Activated naive CD4-positive, alpha-beta T cell treated with anti-CD3 and anti-CD28 coated beads, Interleukin-2, amount 10 ng/mL, durations not matched to agents 7 days and 5 days (primary cell): ENCODE measurements at regions of chr2 and their contacts with region 1.

Region 1: DNA sequence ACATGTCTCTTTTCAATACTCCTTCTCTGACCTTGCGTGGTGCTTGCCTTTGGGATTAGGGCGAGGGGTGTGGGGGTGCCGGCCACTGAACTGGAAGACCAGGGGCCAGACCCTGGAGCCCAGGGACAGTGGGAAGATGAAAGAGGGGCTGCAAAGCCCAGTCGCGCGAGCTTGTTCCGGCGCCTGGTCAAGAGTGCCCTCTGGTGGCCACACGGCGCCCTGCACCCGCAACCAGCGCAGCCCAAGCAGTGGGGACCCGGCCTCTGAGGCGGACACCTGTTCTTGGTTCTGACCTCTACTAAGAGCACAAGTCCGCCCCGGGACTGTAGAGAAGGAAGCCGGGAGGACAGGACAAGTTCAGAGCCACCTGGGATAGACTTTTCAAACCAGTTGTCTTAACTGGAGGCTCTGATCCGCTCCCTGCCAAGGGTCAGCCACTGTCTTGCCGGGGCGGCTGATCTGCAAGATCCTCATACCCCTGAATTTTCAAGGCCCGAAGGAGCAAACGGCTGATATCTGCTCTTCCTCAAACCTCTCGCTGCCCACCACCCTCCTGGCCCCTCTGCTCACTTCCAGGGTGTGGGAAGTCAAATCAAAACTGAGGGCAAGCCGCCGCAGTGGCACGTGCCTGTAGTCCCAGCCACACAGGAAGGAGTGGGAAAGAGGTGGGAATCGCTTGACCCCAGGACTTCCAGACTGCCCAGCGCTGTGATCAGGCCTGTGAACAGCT is 14.9 kb upstream of the MSH6 start:
- DNase-seq: peak; percentile 76
- H3K4me3 Mint-ChIP-seq: no peak overlapping the region
- H3K27ac Mint-ChIP-seq: no peak overlapping the region
- H3K4me1 Mint-ChIP-seq: peaks cover 7% of the 10 kb centered on the region
- H3K27me3 Mint-ChIP-seq: peaks cover 11% of the 10 kb centered on the region

Region 2: GRCh38 chr2:46942139-46942517 is 825.9 kb before region 1 on chr2:
- CTCF ChIA-PET with region 1: no interaction called
- DNase-seq: peak; percentile 79
- H3K4me3 Mint-ChIP-seq: peak overlapping the region; percentile 98
- H3K27ac Mint-ChIP-seq: peak overlapping the region; percentile 99
- H3K4me1 Mint-ChIP-seq: peaks cover 62% of the 10 kb centered on the region
- H3K27me3 Mint-ChIP-seq: no peaks in the 10 kb centered on the region

Region 3: DNA sequence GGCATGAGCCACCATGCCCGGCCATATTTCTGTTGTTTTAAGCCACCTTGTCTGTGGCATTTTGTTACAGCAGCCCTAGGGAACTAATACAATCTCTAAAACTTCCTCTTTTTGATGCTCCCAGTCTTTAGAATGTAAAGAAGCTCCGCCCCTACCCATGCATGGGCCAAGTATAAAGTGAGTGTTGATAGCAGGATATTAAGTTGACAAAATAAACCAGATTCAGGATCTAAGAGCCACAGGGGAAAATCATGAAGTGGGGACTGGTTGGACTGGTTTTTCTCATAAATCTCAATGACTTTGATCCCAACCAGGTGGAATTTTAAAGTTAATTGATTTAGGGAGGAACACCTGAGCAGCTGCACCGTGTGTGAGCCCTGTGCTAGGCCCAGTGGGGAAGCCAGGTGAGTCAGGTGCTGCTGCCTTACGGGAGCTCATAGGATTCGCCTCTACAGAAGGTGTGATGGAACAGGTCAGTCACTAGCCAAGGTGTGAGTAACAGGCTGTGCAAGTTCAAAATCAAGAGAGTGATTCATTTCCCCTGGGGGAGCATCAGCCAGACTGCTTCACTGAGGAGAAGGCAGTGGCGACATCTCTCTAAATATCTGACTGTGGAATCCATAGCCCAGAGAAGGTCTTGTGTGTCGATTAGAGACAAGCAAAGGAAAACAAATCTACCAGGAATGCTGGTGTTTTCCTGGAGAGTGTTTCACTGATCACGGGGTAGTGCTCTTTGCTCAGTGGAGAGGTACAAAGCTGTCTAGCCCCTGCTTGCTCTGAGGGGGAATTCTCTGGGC is 428.1 kb before region 1 on chr2:
- CTCF ChIA-PET with region 1: interaction called, 47 read pairs
- DNase-seq: no peak
- H3K4me3 Mint-ChIP-seq: no peak overlapping the region
- H3K27ac Mint-ChIP-seq: no peak overlapping the region
- H3K4me1 Mint-ChIP-seq: no peaks in the 10 kb centered on the region
- H3K27me3 Mint-ChIP-seq: peaks cover 41% of the 10 kb centered on the region

Region 4: DNA sequence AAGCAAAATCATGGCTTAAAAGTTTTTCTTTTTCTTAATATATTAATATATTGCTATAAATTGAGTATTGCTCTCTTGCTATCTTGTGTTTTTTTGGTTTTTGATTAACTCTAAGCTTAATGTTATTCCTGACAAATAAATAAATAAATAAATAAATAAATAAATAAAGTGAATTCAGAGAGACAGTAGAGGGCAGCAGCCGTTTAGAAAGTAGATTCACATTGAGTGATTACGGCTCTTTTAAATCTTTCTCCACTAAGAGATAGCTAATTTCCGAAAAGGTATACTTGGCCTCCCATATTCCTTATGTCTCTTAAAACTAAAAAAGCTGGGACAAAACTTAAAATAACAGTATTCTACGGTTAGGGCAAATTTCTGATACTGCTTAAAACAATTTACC is 330.8 kb before region 1 on chr2:
- CTCF ChIA-PET with region 1: interaction called, 32 read pairs
- DNase-seq: no peak
- H3K4me3 Mint-ChIP-seq: no peak overlapping the region
- H3K27ac Mint-ChIP-seq: no peak overlapping the region
- H3K4me1 Mint-ChIP-seq: no peaks in the 10 kb centered on the region
- H3K27me3 Mint-ChIP-seq: no peaks in the 10 kb centered on the region

Region 5: DNA sequence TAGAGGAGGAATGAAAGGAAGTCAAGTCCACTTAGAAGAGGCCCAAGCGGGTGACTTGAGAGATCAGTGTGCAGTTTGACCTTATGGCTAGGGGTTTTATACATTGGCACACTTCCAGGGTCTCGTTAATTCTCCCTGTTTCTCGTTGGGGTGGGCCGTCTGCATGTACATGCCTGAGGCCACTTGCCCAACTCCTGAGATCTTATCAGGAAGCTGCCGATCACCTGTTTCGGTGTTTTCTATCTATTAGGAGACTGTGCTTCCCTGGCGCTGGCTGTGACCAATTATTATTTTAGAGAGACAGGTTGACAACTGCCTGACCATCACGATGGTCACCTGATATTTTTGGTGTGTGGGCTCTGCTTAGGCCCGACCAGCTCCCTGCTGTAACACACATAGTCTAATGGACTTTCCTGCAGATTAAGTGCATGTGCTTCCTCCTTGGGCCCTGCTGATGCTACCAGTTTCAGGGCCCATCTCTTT is 16.1 kb before region 1 on chr2:
- CTCF ChIA-PET with region 1: interaction called, 10 read pairs
- DNase-seq: no peak
- H3K4me3 Mint-ChIP-seq: no peak overlapping the region
- H3K27ac Mint-ChIP-seq: no peak overlapping the region
- H3K4me1 Mint-ChIP-seq: peaks cover 8% of the 10 kb centered on the region
- H3K27me3 Mint-ChIP-seq: no peaks in the 10 kb centered on the region